CD4-positive, alpha-beta T cell (primary cell): ENCODE measurements at regions of chr13 and their contacts with region 1.

Region 1: DNA sequence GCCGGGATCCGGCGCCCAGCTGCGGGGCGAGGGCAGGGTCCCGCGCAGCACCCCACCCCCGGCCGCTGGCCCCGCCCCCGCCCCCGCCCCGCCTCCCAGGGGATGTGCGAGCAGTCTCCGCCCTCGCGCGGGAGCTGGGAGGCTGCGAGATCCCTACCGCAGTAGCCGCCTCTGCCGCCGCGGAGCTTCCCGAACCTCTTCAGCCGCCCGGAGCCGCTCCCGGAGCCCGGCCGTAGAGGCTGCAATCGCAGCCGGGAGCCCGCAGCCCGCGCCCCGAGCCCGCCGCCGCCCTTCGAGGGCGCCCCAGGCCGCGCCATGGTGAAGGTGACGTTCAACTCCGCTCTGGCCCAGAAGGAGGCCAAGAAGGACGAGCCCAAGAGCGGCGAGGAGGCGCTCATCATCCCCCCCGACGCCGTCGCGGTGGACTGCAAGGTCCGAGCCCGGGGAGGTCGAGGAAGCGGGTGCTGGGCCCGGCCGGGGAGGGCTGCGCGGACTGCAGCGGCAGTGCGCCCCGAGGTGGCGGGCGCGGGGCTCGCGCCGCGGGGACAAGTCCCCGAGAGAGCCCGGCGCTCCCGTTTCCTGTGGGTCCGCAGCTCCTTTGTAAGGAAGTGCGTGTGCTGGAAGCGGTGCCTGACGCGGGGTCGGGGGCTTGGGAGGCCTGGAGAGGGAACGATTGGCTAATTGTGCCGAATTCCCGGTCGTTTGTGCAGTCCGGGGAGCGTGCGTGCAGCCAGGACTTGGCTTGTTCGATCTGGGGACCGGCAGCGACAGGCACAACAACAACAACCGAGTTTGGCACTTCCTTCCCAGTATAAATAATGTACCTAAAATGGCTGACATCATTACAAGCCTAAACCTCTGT is at the start of gene ITM2B:
- DNase-seq: peak; percentile 44 to 86 (median 62)
- ATAC-seq: peak; percentile 70
- H3K4me3 ChIP-seq: peak within 1 kb of the TSS; percentile 93
- H3K4me3 Mint-ChIP-seq: peak within 1 kb of the TSS; percentile 98
- H3K27ac ChIP-seq: peak within 1 kb of the TSS; percentile 90 to 95
- H3K27ac Mint-ChIP-seq: peak within 1 kb of the TSS; percentile 97
- H3K4me1 ChIP-seq: peaks cover 22% of the 10 kb centered on the region
- H3K4me1 Mint-ChIP-seq: peaks cover 68% of the 10 kb centered on the region
- H3K27me3 ChIP-seq: no peaks in the 10 kb centered on the region
- H3K27me3 Mint-ChIP-seq: no peaks in the 10 kb centered on the region
- CTCF ChIP-seq: peak; percentile 68
- total RNA-seq, gene ITM2B: 305 to 323 TPM

Region 2: DNA sequence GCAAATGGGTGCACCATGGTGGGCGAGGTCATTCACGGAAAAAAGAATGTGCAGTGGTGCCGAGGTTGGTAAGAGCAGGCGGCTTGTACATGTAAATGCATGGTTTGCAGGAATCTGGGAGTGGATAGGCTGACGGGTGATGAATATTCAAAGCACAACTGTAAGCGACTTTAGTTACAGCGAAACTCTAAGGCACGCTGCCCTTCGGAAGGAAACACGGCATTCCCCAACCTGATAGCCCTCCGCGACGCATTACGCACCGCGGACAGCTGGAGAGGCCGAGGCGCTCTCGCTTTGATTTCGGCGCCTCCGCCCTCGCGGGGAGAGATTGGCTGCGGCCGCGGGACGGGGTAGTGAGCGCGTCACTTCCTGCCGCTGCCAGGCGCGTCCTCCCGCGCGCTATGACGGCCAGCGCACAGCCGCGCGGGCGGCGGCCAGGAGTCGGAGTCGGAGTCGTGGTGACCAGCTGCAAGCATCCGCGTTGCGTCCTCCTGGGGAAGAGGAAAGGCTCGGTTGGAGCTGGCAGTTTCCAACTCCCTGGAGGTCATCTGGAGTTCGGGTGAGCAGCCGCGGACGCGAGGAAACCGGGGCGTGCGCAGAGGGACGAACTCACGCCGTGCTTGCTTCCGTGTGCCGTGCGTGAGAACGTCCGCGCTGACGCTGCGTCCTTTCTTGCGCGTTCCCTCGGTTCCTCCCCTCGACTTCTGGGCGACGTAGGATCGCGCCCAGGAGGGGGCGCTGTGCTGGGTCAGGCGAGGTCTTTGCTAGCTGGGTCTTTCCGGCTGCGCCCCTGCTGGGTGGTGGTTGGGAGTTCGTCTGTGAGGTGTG is 195.7 kb before region 1 on chr13 and contains the start of gene NUDT15:
- CTCF ChIA-PET with region 1: interaction called, 6 read pairs
- POLR2A ChIA-PET with region 1: interaction called, 10 read pairs
- intact Hi-C with region 1: no loop called
- DNase-seq: peak; percentile 90 to 99 (median 96)
- ATAC-seq: peak; percentile 90
- H3K4me3 ChIP-seq: peak within 1 kb of the TSS; percentile 68
- H3K4me3 Mint-ChIP-seq: peak within 1 kb of the TSS; percentile 94
- H3K27ac ChIP-seq: peak within 1 kb of the TSS; percentile 79 to 98
- H3K27ac Mint-ChIP-seq: peak within 1 kb of the TSS; percentile 97
- H3K4me1 ChIP-seq: peaks cover 18% of the 10 kb centered on the region
- H3K4me1 Mint-ChIP-seq: peaks cover 42% of the 10 kb centered on the region
- H3K27me3 ChIP-seq: no peaks in the 10 kb centered on the region
- H3K27me3 Mint-ChIP-seq: no peaks in the 10 kb centered on the region
- CTCF ChIP-seq: peak; percentile 100
- total RNA-seq, gene NUDT15: 14.4 to 16.2 TPM

Region 3: GRCh38 chr13:48126944-48127830 is 106.1 kb before region 1 on chr13:
- CTCF ChIA-PET with region 1: interaction called, 12 read pairs
- POLR2A ChIA-PET with region 1: interaction called, 56 read pairs
- intact Hi-C with region 1: loop called (anchors 1 kb)
- DNase-seq: peak; percentile 6 to 84 (median 32)
- ATAC-seq: peak; percentile 93
- H3K4me3 ChIP-seq: no peak overlapping the region
- H3K4me3 Mint-ChIP-seq: peak overlapping the region; percentile 23
- H3K27ac ChIP-seq: peak overlapping the region; percentile 61 to 73
- H3K27ac Mint-ChIP-seq: peak overlapping the region; percentile 91
- H3K4me1 ChIP-seq: peaks cover 11% of the 10 kb centered on the region
- H3K4me1 Mint-ChIP-seq: peaks cover 33% of the 10 kb centered on the region
- H3K27me3 ChIP-seq: no peaks in the 10 kb centered on the region
- H3K27me3 Mint-ChIP-seq: no peaks in the 10 kb centered on the region
- CTCF ChIP-seq: peak; percentile 81

Region 4: DNA sequence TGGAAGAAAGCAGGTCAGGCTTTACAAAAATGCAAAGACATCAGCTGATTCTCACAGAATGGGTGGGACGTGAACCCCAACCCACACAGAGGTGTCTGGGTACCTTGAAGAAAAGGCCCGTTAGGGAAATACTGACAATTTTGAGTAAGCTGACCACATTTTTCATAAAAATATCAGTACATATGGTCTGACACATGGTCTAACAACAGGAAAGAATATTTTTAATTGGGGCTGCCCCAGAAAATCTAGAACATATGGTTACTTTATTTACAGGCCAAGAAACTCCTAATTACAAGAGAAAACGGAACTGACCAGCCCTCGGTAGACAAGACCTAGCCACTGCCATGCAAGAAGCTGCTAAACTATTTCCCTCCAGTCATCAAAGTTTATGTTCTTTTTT is 49.0 kb before region 1 on chr13:
- CTCF ChIA-PET with region 1: no interaction called
- POLR2A ChIA-PET with region 1: interaction called, 87 read pairs
- intact Hi-C with region 1: loop called (anchors 2 kb)
- DNase-seq: no peak
- ATAC-seq: no peak
- H3K4me3 ChIP-seq: no peak overlapping the region
- H3K4me3 Mint-ChIP-seq: peak overlapping the region; percentile 43
- H3K27ac ChIP-seq: peak overlapping the region in 1 of 2 donors; percentile 19
- H3K27ac Mint-ChIP-seq: peak overlapping the region; percentile 89
- H3K4me1 ChIP-seq: peaks cover 45% of the 10 kb centered on the region
- H3K4me1 Mint-ChIP-seq: peaks cover 68% of the 10 kb centered on the region
- H3K27me3 ChIP-seq: no peaks in the 10 kb centered on the region
- H3K27me3 Mint-ChIP-seq: no peaks in the 10 kb centered on the region
- CTCF ChIP-seq: no peak

Region 5: DNA sequence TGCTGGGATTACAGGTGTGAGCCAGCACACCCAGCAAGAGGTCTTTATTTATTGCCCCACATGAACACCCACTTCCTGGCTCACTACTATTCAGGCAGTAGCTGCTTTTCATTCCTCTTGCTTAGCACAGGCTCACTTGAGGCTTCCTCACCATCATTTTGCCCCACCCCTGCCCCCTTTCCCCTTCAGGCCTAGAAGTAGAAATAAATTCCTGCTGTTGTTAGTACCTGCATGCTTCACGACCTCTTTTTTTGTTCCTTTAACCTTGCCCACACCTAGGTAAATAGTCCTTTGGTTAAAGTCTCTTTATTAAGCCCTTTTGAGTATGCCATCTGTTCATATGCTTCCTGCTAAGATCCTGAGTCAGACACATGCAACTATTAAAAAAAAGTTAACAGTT is 33.8 kb before region 1 on chr13:
- CTCF ChIA-PET with region 1: no interaction called
- POLR2A ChIA-PET with region 1: interaction called, 13 read pairs
- intact Hi-C with region 1: no loop called
- DNase-seq: peak in 2 of 14 experiments; percentile 19 to 29
- ATAC-seq: no peak
- H3K4me3 ChIP-seq: no peak overlapping the region
- H3K4me3 Mint-ChIP-seq: no peak overlapping the region
- H3K27ac ChIP-seq: no peak overlapping the region
- H3K27ac Mint-ChIP-seq: peak overlapping the region; percentile 28
- H3K4me1 ChIP-seq: peaks cover 8% of the 10 kb centered on the region
- H3K4me1 Mint-ChIP-seq: peaks cover 22% of the 10 kb centered on the region
- H3K27me3 ChIP-seq: no peaks in the 10 kb centered on the region
- H3K27me3 Mint-ChIP-seq: no peaks in the 10 kb centered on the region
- CTCF ChIP-seq: no peak

Region 6: DNA sequence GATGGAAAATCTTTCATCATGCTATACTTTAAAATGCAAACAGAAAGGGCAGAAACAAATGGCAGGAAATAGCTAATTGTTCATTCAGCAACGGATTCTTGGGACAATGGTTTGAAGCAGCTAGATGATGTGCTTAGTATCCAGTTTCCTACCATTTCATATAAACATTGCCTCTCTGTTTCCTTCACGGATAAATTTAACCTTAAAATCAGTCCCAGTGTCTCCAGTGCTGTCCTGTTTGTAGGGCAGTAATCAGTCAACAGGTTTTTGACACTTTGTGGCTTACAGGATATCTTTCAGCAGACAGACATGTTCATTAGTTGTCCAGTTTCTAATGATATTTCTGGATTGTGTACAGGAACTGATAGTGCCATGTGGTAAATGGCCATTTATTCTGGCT is 45.5 kb after region 1 on chr13:
- CTCF ChIA-PET with region 1: no interaction called
- POLR2A ChIA-PET with region 1: no interaction called
- intact Hi-C with region 1: no loop called
- DNase-seq: no peak
- ATAC-seq: no peak
- H3K4me3 ChIP-seq: no peak overlapping the region
- H3K4me3 Mint-ChIP-seq: no peak overlapping the region
- H3K27ac ChIP-seq: no peak overlapping the region
- H3K27ac Mint-ChIP-seq: no peak overlapping the region
- H3K4me1 ChIP-seq: no peaks in the 10 kb centered on the region
- H3K4me1 Mint-ChIP-seq: no peaks in the 10 kb centered on the region
- H3K27me3 ChIP-seq: no peaks in the 10 kb centered on the region
- H3K27me3 Mint-ChIP-seq: no peaks in the 10 kb centered on the region
- CTCF ChIP-seq: no peak

Region 7: DNA sequence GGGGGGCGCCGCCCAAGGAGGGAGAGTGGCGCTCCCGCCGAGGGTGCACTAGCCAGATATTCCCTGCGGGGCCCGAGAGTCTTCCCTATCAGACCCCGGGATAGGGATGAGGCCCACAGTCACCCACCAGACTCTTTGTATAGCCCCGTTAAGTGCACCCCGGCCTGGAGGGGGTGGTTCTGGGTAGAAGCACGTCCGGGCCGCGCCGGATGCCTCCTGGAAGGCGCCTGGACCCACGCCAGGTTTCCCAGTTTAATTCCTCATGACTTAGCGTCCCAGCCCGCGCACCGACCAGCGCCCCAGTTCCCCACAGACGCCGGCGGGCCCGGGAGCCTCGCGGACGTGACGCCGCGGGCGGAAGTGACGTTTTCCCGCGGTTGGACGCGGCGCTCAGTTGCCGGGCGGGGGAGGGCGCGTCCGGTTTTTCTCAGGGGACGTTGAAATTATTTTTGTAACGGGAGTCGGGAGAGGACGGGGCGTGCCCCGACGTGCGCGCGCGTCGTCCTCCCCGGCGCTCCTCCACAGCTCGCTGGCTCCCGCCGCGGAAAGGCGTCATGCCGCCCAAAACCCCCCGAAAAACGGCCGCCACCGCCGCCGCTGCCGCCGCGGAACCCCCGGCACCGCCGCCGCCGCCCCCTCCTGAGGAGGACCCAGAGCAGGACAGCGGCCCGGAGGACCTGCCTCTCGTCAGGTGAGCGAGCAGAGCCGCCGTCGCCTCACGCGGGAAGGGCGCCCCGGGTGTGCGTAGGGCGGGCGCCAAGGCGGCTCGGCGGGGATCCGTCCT is 70.3 kb after region 1 on chr13 and contains the start of gene RB1:
- CTCF ChIA-PET with region 1: no interaction called
- POLR2A ChIA-PET with region 1: interaction called, 15 read pairs
- intact Hi-C with region 1: loop called (anchors 1 to 2 kb)
- DNase-seq: peak; percentile 77 to 97 (median 85)
- ATAC-seq: peak; percentile 72
- H3K4me3 ChIP-seq: peak within 1 kb of the TSS; percentile 95
- H3K4me3 Mint-ChIP-seq: peak within 1 kb of the TSS; percentile 92
- H3K27ac ChIP-seq: peak within 1 kb of the TSS; percentile 97 to 98
- H3K27ac Mint-ChIP-seq: peak within 1 kb of the TSS; percentile 97
- H3K4me1 ChIP-seq: peaks cover 18% of the 10 kb centered on the region
- H3K4me1 Mint-ChIP-seq: peaks cover 45% of the 10 kb centered on the region
- H3K27me3 ChIP-seq: no peaks in the 10 kb centered on the region
- H3K27me3 Mint-ChIP-seq: no peaks in the 10 kb centered on the region
- CTCF ChIP-seq: no peak
- total RNA-seq, gene RB1: 14.9 to 18.4 TPM